Common myeloid progenitor, CD34-positive (primary cell): ENCODE measurements at regions of chr6 and their contacts with region 1.

Region 1: DNA sequence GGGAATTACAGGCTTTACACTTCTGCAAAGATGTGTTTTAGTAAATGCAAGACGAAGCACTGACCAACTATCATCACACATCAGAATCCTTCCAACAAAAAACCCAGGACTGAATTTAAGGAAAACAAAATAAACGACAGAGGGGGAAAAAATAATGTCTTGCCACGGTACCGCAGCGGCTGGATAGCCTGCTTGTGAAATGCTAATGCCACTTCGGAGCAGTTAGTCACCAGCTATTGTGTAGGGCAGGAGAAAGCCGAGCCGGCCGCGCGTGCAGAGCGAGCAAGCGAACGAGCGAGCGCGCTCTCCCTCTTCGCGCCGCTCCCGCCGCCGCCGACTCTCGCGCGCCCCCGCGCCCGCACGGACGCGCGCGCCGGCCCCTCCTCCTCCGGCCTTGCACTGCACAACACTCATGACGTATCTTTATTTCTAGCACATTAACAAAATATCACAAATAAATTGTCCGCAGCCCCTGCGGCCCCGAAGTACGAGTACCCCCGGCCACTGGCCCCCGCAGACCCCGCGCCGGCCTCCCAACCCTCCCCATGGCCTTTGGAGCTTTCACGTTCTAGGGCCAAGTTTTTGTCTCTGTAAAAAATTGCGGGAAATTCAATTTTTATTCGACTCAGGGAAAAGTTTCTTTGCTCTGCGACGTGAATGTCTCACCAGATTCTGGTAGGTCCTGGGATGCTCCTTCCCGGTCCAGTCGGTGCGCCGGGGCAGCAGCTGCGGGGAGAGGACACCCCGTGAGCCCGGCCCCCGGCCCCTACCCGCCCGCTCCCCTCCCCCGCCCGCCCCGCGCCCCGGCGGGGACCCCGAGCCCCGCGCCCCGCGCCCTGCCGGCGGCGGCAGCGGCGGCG is 1.0 kb downstream of the PHIP start:
- DNase-seq: peak; percentile 88 to 95 (median 94)
- H3K4me3 ChIP-seq: peak overlapping the region; percentile 55 to 100 (median 94)
- H3K27ac ChIP-seq: peak overlapping the region; percentile 87 to 95
- H3K4me1 ChIP-seq: peaks cover 13 to 42% (median 24%) of the 10 kb centered on the region in 4 experiments
- H3K27me3 ChIP-seq: no peaks in the 10 kb centered on the region

Region 2: DNA sequence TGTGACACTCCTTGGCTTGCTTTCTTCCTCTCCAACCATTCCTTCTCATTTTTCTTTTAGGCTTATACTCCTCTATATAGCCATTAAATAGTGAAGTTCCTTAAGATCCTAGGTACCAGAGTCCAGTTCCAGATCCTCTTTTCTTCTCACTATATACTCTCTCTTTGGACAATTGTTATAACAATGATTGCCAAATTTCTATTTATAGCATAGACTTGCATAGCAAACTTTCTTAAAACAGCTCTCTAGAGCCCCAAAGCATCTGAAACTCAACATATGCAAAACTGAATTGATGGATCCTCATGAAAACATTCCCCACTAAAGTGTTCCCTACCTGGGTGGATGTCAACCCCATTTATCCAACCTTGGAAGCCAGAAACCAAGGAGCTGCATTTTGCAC is 12.4 kb before region 1 on chr6:
- CTCF ChIA-PET with region 1: interaction called, 10 read pairs
- POLR2A ChIA-PET with region 1: interaction called, 4 read pairs
- DNase-seq: no peak
- H3K4me3 ChIP-seq: no peak overlapping the region
- H3K27ac ChIP-seq: no peak overlapping the region
- H3K4me1 ChIP-seq: peaks cover 0 to 7% (median 6%) of the 10 kb centered on the region in 4 experiments
- H3K27me3 ChIP-seq: no peaks in the 10 kb centered on the region